SK-N-SH (cell line): ENCODE measurements at regions of chr2 and their contacts with region 1.

Region 1: GRCh38 chr2:3303583-3304406 is 73.8 kb downstream of the EIPR1 start:
- DNase-seq: peak; percentile 97
- H3K4me3 ChIP-seq: peak overlapping the region; percentile 23 to 27; a peak in 3 of 4 replicates
- H3K27ac ChIP-seq: peak overlapping the region; percentile 12 to 99; a peak in 3 of 4 replicates
- H3K4me1 ChIP-seq: peaks cover 4 to 34% of the 10 kb centered on the region in 2 experiments; a peak in 3 of 4 replicates
- H3K27me3 ChIP-seq: no peaks in the 10 kb centered on the region
- CTCF ChIP-seq: peak; percentile 99
- EP300 ChIP-seq: peak in 1 of 2 experiments; percentile 19; a peak in 1 of 4 replicates
- RAD21 ChIP-seq: peak; percentile 97

Region 2: GRCh38 chr2:3151153-3151918 is 152.5 kb before region 1 on chr2:
- CTCF ChIA-PET with region 1: no interaction called
- POLR2A ChIA-PET with region 1: no interaction called
- DNase-seq: no peak
- H3K4me3 ChIP-seq: no peak overlapping the region
- H3K27ac ChIP-seq: no peak overlapping the region
- H3K4me1 ChIP-seq: peaks cover 0 to 3% of the 10 kb centered on the region in 2 experiments; a peak in 1 of 4 replicates
- H3K27me3 ChIP-seq: no peaks in the 10 kb centered on the region
- CTCF ChIP-seq: no peak
- EP300 ChIP-seq: no peak
- RAD21 ChIP-seq: no peak

Region 3: GRCh38 chr2:3198119-3198518 is 105.7 kb before region 1 on chr2:
- CTCF ChIA-PET with region 1: interaction called, 10 read pairs
- POLR2A ChIA-PET with region 1: no interaction called
- DNase-seq: peak; percentile 43
- H3K4me3 ChIP-seq: no peak overlapping the region
- H3K27ac ChIP-seq: peak overlapping the region in 1 of 2 experiments; percentile 57; a peak in 2 of 4 replicates
- H3K4me1 ChIP-seq: peaks cover 0 to 49% of the 10 kb centered on the region in 2 experiments; a peak in 2 of 4 replicates
- H3K27me3 ChIP-seq: no peaks in the 10 kb centered on the region
- CTCF ChIP-seq: peak; percentile 27; the same call in 1 of the 2 replicates
- EP300 ChIP-seq: no peak
- RAD21 ChIP-seq: peak; percentile 40

Region 4: DNA sequence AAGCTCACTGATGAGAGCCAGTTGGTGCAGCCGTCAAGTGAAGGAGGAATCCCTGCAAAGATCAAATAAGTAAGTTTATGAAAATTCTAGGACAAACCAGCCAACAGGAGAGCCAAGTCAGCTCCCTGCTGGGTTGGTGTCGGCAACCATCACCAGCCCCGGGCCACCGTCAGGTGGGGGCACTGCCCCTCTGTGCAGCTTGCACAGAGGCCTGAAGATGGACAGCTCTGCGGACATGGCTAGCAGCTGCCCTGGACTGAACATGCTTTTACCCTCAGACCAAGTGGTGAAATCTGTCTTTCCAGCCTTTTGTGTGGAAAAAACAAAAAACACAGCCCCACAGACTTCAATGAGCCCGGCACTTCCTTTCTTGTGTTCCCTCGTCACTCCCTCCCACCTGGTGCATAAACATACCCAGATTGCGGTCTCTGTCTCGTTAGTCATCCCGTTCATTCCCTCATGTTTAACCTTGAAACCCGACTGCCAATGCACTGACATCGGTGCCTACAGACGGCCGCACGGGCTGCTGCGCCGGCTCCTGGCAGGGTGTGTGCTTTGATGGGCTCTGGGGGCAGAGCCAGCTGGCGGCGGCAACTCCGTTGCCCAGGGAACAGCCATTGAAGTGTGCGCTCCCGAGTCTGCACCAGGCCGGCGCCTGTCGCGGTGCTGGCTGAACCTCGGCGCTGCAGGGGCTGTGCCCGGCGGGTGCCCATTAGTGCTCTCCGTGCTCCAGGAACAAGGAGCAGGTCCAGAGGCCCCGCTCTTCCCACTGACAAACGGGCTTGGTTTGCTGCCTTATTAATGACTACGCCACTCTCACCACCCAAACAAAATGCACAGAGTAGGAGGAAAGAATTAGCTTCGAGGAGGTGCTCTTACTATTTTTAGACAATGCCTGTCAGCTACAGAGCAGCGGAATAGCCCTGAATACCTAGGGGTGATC is 21.5 kb before region 1 on chr2:
- CTCF ChIA-PET with region 1: interaction called, 24 read pairs
- POLR2A ChIA-PET with region 1: interaction called, 10 read pairs
- DNase-seq: peak; percentile 99
- H3K4me3 ChIP-seq: peak overlapping the region; percentile 22 to 31; a peak in 2 of 4 replicates
- H3K27ac ChIP-seq: peak overlapping the region in 1 of 2 experiments; percentile 100; a peak in 2 of 4 replicates
- H3K4me1 ChIP-seq: peaks cover 12 to 82% of the 10 kb centered on the region in 2 experiments; a peak in 3 of 4 replicates
- H3K27me3 ChIP-seq: no peaks in the 10 kb centered on the region
- CTCF ChIP-seq: no peak
- EP300 ChIP-seq: peak in 1 of 2 experiments; percentile 78; a peak in 2 of 4 replicates
- RAD21 ChIP-seq: peak; percentile 58

Region 5: GRCh38 chr2:3288470-3289163 is 15.2 kb before region 1 on chr2:
- CTCF ChIA-PET with region 1: interaction called, 24 read pairs
- POLR2A ChIA-PET with region 1: interaction called, 7 read pairs
- DNase-seq: peak; percentile 74
- H3K4me3 ChIP-seq: no peak overlapping the region
- H3K27ac ChIP-seq: peak overlapping the region in 1 of 2 experiments; percentile 69; a peak in 2 of 4 replicates
- H3K4me1 ChIP-seq: peaks cover 0 to 87% of the 10 kb centered on the region in 2 experiments; a peak in 2 of 4 replicates
- H3K27me3 ChIP-seq: no peaks in the 10 kb centered on the region
- CTCF ChIP-seq: no peak
- EP300 ChIP-seq: 0 out of 4 replicates have a peak, but pooled peaks of 1 of the 2 experiments have one; percentile 8
- RAD21 ChIP-seq: no peak

Region 6: GRCh38 chr2:3313781-3314375 is 10.1 kb after region 1 on chr2:
- CTCF ChIA-PET with region 1: interaction called, 15 read pairs
- POLR2A ChIA-PET with region 1: interaction called, 7 read pairs
- DNase-seq: peak; percentile 91
- H3K4me3 ChIP-seq: no peak overlapping the region; a peak in 1 of 4 replicates
- H3K27ac ChIP-seq: peak overlapping the region in 1 of 2 experiments; percentile 94; a peak in 2 of 4 replicates
- H3K4me1 ChIP-seq: peaks cover 0 to 24% of the 10 kb centered on the region in 2 experiments; a peak in 2 of 4 replicates
- H3K27me3 ChIP-seq: no peaks in the 10 kb centered on the region
- CTCF ChIP-seq: no peak
- EP300 ChIP-seq: peak in 1 of 2 experiments; percentile 64; a peak in 2 of 4 replicates
- RAD21 ChIP-seq: no peak